ENCODE measurements at regions of chr9 and their contacts with region 1.

Region 1: DNA sequence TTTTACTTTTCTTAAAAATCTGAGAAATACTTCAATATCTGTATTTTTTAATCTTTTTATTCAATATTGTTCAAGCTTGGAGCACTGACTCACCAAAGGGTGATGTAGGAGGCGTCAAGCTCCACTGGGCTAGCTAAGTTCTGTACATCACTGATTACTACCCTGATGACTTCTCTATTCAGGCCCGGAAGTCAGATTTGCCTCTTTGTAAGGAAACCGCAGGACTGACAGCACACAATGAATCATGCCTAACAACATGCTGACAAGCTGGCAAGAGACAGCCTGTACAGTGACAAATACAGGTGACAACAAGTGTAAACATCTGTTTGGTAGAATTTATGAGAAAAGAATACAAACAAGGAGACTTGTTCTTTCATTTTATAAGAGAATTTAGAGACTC is 627.9 kb upstream of the RORB start:
- DNase-seq: peak; percentile 93
- H3K4me3 ChIP-seq: no peak overlapping the region
- H3K27ac ChIP-seq: no peak overlapping the region
- H3K4me1 ChIP-seq: peaks cover 14% of the 10 kb centered on the region
- H3K27me3 ChIP-seq: no peaks in the 10 kb centered on the region
- CTCF ChIP-seq: no peak

Region 2: DNA sequence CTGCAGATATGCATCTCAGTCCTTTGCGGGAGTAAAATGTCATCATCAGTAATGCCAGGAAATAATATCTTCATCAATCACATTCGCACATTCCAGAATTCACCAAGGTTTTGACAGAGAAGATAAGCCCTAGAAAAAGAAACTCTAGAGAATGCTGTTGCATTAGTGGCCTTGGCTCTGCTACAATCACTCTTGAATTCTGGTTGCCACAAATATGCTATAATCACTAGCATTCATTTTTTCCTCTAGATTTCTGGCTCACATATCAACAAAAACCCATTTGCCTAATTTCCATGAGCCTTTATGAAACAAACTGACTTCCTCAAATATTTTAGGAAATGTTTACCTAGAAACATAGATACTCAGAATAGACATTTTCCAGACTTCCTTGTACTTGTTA is 64.2 kb before region 1 on chr9:
- CTCF ChIA-PET with region 1: no interaction called
- dilution Hi-C with region 1: no loop called
- in situ Hi-C with region 1: no loop called
- intact Hi-C with region 1: loop called (anchors 10 kb)
- DNase-seq: no peak
- H3K4me3 ChIP-seq: no peak overlapping the region
- H3K27ac ChIP-seq: no peak overlapping the region
- H3K4me1 ChIP-seq: peaks cover 3% of the 10 kb centered on the region
- H3K27me3 ChIP-seq: no peaks in the 10 kb centered on the region
- CTCF ChIP-seq: no peak

Region 3: DNA sequence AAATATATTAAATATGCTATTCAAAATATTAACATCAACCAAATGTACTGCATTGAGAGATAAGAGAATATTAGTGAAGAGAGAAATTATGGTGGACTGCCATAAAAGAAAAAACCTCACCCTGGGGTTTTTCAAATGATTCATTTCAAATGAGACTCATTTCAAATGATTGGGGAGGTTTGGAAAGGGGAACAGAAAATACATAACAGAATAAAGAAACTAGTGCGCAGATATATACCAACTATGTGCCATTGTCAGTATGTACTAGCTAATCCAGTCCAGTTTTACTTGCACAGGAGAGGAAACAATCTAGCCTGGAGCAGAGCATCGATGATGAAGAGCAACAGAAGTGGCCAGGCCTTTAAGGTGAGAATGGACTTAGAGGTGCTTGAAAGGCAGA is 23.7 kb before region 1 on chr9:
- CTCF ChIA-PET with region 1: no interaction called
- dilution Hi-C with region 1: no loop called
- in situ Hi-C with region 1: no loop called
- intact Hi-C with region 1: no loop called
- DNase-seq: no peak
- H3K4me3 ChIP-seq: no peak overlapping the region
- H3K27ac ChIP-seq: no peak overlapping the region
- H3K4me1 ChIP-seq: no peaks in the 10 kb centered on the region
- H3K27me3 ChIP-seq: no peaks in the 10 kb centered on the region
- CTCF ChIP-seq: no peak

Measured in mammary epithelial cell (primary cell).